Head of caudate nucleus (tissue), 42 donors: ENCODE measurements at regions of chr12 and their contacts with region 1.

Region 1: DNA sequence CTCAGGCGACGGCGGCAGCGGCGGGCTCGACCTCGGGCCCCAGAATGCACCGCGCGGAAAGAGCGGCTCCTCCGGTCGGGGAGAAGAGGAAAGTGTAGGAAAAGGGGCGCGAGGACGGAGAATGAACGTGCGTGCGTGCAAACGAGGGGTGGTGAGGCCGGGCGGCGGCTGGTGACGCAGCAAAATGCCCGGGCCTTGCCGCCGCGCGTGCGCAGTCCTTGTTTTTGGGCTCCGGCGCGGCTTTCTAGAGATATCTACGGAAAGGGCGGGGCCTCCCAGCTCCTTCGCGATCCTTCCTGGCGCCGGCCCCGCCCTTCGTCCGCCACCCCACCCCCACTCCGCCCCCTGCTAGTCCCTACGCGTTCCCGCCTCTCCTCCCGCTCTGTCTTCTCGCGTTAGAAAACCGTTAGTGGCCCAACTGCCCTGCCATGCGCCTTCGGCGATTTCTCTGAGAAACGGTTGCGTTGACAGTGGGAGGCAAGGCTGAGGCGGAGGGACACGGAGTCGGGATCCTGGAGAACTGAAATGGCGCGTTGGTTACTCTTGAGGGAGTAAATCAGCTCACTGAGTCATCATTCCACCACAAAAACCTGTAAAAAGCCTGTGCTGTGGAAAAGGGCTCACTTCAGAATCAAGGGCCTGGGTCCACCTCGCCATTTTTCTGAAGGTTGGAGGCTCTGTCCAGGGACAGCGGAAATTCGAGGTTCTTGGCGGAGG is at the start of gene PTGES3:
- DNase-seq: peak; percentile 84 to 98 (median 93)

Region 2: DNA sequence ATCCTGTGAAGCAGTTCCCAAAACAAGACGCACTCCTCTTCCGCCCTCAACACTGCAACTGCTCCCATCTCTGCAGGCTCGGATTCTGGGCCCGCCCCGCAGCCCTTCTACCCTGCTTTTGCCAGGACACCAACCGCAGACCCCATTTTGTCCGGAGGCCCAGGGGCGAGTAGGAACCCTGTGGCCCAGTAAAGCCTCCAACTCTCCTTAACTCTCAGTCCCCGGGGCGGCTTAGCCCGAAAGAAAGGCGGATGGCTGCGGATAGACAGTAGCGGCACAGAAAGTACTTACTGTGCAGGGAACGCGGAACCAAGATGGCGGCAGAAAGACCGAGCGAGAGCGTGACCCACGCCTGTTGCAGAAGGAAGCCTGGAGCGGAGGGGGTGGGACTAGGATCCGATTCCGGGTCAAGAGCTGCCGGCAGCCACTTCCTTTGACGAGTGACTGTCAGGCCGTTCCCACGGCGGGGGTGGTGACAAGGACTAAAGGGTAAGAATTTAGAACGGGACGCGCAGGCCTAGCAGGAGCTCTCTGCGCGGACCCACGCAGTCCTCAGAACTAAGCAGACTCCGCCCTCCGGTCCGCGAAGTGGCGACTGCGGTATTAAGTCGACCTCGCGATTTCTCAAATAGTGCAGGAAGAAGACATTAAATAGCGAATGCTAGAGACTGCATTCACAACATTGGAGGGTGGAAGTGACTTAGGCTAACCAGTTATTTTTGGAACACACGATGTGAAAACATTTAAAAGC is 36.9 kb after region 1 on chr12 and contains the start of gene NACA:
- intact Hi-C with region 1: loop called (anchors 2 kb)
- DNase-seq: peak; percentile 98 to 100 (median 99)